ENCODE measurements at regions of chr19 and their contacts with region 1.

Region 1: GRCh38 chr19:19531951-19532805 is 3.5 kb downstream of the YJEFN3 start:
- DNase-seq: no peak
- ATAC-seq: peak; percentile 83
- H3K4me3 ChIP-seq: no peak overlapping the region
- H3K27ac ChIP-seq: no peak overlapping the region
- H3K4me1 ChIP-seq: no peaks in the 10 kb centered on the region; a peak in 1 of 4 replicates
- H3K27me3 ChIP-seq: no peaks in the 10 kb centered on the region
- CTCF ChIP-seq: peak; percentile 80 to 97 (median 90)
- POLR2A ChIP-seq: no peak
- RAD21 ChIP-seq: peak; percentile 91

Region 2: GRCh38 chr19:19488875-19489690 is 43.1 kb before region 1 on chr19:
- CTCF ChIA-PET with region 1: no interaction called
- POLR2A ChIA-PET with region 1: no interaction called
- RAD21 ChIA-PET with region 1: no interaction called
- intact Hi-C with region 1: no loop called
- DNase-seq: peak; percentile 89
- ATAC-seq: peak; percentile 70
- H3K4me3 ChIP-seq: peak overlapping the region in 1 of 2 experiments; percentile 5; a peak in 1 of 4 replicates
- H3K27ac ChIP-seq: peak overlapping the region; percentile 72
- H3K4me1 ChIP-seq: peaks cover 19 to 43% of the 10 kb centered on the region in 2 experiments
- H3K27me3 ChIP-seq: no peaks in the 10 kb centered on the region
- CTCF ChIP-seq: no peak
- POLR2A ChIP-seq: no peak
- RAD21 ChIP-seq: no peak

Region 3: GRCh38 chr19:19643158-19644053 is 111.2 kb after region 1 on chr19 and contains the start of gene GMIP:
- CTCF ChIA-PET with region 1: interaction called, 21 read pairs
- POLR2A ChIA-PET with region 1: no interaction called
- RAD21 ChIA-PET with region 1: interaction called in 1 of 2 experiments, 3 read pairs
- intact Hi-C with region 1: loop called (anchors 1 kb)
- DNase-seq: peak; percentile 36
- ATAC-seq: peak; percentile 90
- H3K4me3 ChIP-seq: peak within 1 kb of the TSS; percentile 85 to 94
- H3K27ac ChIP-seq: peak within 1 kb of the TSS; percentile 75
- H3K4me1 ChIP-seq: peaks cover 0 to 14% of the 10 kb centered on the region in 2 experiments; a peak in 2 of 4 replicates
- H3K27me3 ChIP-seq: no peaks in the 10 kb centered on the region
- CTCF ChIP-seq: peak; percentile 80 to 93 (median 84)
- POLR2A ChIP-seq: peak; percentile 42
- RAD21 ChIP-seq: peak; percentile 88
- total RNA-seq, gene GMIP: 16.3 TPM

Measured in HCT116 (cell line).